Panc1 (cell line): ENCODE measurements at regions of chr18 and their contacts with region 1.

Region 1: GRCh38 chr18:65620076-65620696 is 130.6 kb upstream of the CDH7 start:
- DNase-seq: no peak
- ATAC-seq: no peak
- H3K4me3 ChIP-seq: no peak overlapping the region
- H3K27ac ChIP-seq: no peak overlapping the region
- H3K4me1 ChIP-seq: no peaks in the 10 kb centered on the region
- H3K27me3 ChIP-seq: no peaks in the 10 kb centered on the region
- CTCF ChIP-seq: no peak

Region 2: DNA sequence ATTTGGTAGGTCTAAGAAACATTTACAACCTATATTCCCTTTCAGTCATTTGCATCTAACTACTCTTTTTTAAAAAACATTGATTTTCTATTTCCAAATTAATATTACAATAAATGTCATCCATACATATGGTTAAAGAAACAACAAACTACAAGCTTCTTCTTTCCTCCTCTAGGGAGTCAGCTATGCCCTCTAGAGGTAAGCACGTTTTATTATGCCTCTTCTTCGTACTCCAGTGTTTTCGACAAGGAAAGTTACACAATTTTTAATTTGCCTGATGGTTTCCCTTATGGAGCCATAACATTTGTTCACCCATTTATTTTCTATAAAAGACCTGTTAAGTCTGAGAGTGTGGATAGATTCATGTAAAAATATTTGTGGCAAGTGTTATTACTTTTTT is 52.8 kb before region 1 on chr18:
- CTCF ChIA-PET with region 1: no interaction called
- POLR2A ChIA-PET with region 1: no interaction called
- in situ Hi-C with region 1: no loop called
- intact Hi-C with region 1: no loop called
- DNase-seq: no peak
- ATAC-seq: no peak
- H3K4me3 ChIP-seq: no peak overlapping the region
- H3K27ac ChIP-seq: no peak overlapping the region
- H3K4me1 ChIP-seq: no peaks in the 10 kb centered on the region
- H3K27me3 ChIP-seq: no peaks in the 10 kb centered on the region
- CTCF ChIP-seq: peak; percentile 29; the same call in 1 of the 2 replicates

Region 3: GRCh38 chr18:66141716-66142115 is 521.5 kb after region 1 on chr18:
- CTCF ChIA-PET with region 1: no interaction called
- POLR2A ChIA-PET with region 1: no interaction called
- in situ Hi-C with region 1: no loop called
- intact Hi-C with region 1: loop called (anchors 5 kb)
- DNase-seq: no peak
- ATAC-seq: no peak
- H3K4me3 ChIP-seq: no peak overlapping the region
- H3K27ac ChIP-seq: no peak overlapping the region
- H3K4me1 ChIP-seq: no peaks in the 10 kb centered on the region
- H3K27me3 ChIP-seq: no peaks in the 10 kb centered on the region
- CTCF ChIP-seq: no peak